GM12878 (cell line): ENCODE measurements at regions of chr1 and their contacts with region 1.

Region 1: GRCh38 chr1:37999430-38000232 is 5.7 kb downstream of the FHL3 start:
- DNase-seq: no peak
- ATAC-seq: 0 out of 3 replicates have a peak, but pooled peaks have one; percentile 12
- H3K4me3 ChIP-seq: no peak overlapping the region
- H3K27ac ChIP-seq: peak overlapping the region; percentile 56
- H3K4me1 ChIP-seq: peaks cover 27% of the 10 kb centered on the region
- H3K27me3 ChIP-seq: 0 out of 4 replicates have a peak, but pooled peaks cover 0 to under 1% of the 10 kb centered on the region in 2 experiments
- CTCF ChIP-seq: no peak
- EP300 ChIP-seq: no peak
- POLR2A ChIP-seq: no peak
- RAD21 ChIP-seq: no peak

Region 2: DNA sequence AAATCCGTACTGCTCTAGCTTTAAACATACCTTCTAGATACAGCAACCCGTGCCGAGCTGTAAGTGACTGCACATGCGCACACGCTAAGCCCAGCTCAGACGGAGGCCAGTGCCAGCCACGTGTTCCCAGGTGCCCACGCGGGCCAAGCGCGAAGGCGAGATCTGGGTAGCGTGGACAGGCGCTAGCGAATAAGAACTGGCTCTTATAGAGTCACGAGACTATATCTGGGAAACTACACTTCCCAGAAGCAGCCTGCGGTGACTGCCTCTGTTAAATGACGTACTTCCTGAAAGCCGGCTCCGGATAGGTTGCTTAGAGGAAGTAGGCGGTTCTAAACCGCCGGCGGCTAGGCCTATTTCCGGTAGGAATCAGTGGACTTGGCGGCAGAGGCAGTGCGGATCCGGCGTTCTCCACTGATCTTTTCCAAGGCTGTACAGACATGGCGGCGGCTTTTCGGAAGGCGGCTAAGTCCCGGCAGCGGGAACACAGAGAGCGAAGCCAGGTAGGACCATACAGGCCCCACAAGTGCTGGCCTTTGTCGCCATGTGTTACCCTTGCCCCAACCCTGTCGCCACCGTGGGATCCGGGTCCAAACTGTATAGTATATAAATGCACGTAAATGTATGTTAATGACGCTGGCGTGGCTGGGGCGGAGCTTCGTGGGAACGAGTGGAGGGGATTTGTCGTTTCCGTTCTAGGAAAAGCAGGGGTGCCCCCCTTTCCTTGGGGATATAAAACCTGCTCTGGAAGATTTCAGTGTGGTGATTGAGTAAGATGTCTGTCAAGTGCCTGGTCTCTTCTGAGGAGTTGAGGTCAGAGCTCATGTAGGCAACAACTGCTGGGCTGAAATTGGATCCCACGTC is 13.0 kb after region 1 on chr1 and contains the start of gene UTP11:
- CTCF ChIA-PET with region 1: interaction called, 8 read pairs
- POLR2A ChIA-PET with region 1: interaction called, 7 read pairs
- RAD21 ChIA-PET with region 1: no interaction called
- SMC1A ChIA-PET with region 1: interaction called, 16 read pairs
- in situ Hi-C with region 1: no loop called
- intact Hi-C with region 1: no loop called
- DNase-seq: peak; percentile 86
- ATAC-seq: peak; percentile 96
- H3K4me3 ChIP-seq: peak within 1 kb of the TSS; percentile 84
- H3K27ac ChIP-seq: peak within 1 kb of the TSS; percentile 84
- H3K4me1 ChIP-seq: peaks cover 8% of the 10 kb centered on the region; the same call in 1 of the 2 replicates
- H3K27me3 ChIP-seq: no peaks in the 10 kb centered on the region
- CTCF ChIP-seq: no peak
- EP300 ChIP-seq: no peak
- POLR2A ChIP-seq: peak; percentile 87
- RAD21 ChIP-seq: no peak
- polyA plus RNA-seq, gene UTP11: 96.4 to 107 TPM